ENCODE measurements at regions of chr7 and their contacts with region 1.

Region 1: DNA sequence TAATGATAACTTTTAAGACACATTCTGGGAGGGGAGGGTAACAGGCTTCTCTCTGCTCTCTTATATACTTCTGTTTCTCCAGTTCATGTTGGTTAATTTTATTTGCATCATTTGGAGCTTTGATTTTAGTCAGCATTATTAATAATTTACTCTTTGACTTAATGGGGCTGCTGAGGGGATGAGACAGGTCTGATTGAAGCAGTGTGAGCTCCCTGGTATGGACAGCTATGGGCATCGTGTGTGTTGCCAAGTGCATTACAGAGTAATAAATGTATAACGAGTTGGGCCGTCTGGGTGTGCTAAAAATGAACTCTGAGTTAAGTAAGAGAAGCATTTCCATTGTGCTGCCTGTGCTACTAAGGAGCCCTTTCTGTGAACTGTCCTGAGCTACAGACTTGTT is 31.7 kb upstream of the IKZF1 start:
- DNase-seq: no peak
- ATAC-seq: peak; percentile 43
- H3K4me3 Mint-ChIP-seq: peak overlapping the region; percentile 12
- H3K27ac Mint-ChIP-seq: peak overlapping the region; percentile 82
- H3K4me1 Mint-ChIP-seq: peaks cover 99% of the 10 kb centered on the region
- H3K27me3 Mint-ChIP-seq: no peaks in the 10 kb centered on the region
- CTCF ChIP-seq: no peak

Region 2: DNA sequence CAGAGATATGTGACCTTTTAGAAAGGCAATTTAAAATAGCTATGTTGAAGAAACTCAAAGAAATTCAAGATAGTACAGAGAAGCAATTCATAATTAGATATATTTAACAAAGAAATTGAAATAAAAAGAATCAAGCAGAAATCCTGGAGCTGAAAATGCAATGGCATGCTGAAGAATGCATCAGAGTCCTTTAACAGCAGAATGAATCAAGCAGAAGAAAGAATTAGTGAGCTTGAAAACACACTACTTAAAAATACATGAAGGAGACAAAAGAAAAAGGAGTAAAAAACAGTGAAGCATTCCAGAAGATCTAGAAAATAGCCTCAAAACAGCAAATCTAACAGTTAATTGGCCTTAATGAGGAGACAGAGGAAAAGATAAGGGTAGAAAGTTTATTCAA is 199.7 kb before region 1 on chr7:
- CTCF ChIA-PET with region 1: no interaction called
- POLR2A ChIA-PET with region 1: no interaction called
- intact Hi-C with region 1: no loop called
- DNase-seq: no peak
- ATAC-seq: no peak
- H3K4me3 Mint-ChIP-seq: no peak overlapping the region
- H3K27ac Mint-ChIP-seq: no peak overlapping the region
- H3K4me1 Mint-ChIP-seq: peaks cover 18% of the 10 kb centered on the region
- H3K27me3 Mint-ChIP-seq: peaks cover 33% of the 10 kb centered on the region
- CTCF ChIP-seq: no peak

Region 3: GRCh38 chr7:50369143-50370026 is 96.6 kb after region 1 on chr7:
- CTCF ChIA-PET with region 1: interaction called, 9 read pairs
- POLR2A ChIA-PET with region 1: interaction called, 8 read pairs
- intact Hi-C with region 1: loop called (anchors 1 kb)
- DNase-seq: no peak
- ATAC-seq: peak; percentile 66
- H3K4me3 Mint-ChIP-seq: no peak overlapping the region
- H3K27ac Mint-ChIP-seq: peak overlapping the region; percentile 74
- H3K4me1 Mint-ChIP-seq: peaks cover 94% of the 10 kb centered on the region
- H3K27me3 Mint-ChIP-seq: no peaks in the 10 kb centered on the region
- CTCF ChIP-seq: peak; percentile 50

Measured in activated B cell treated with CpG ODN at 0.5 μM for 24 hours (primary cell).